Dendritic cell treated with granulocyte-macrophage colony-stimulating factor and Interleukin-4, amounts not matched to agents 40 ng/mL and 50 ng/mL, for 4 days (primary cell): ENCODE measurements at regions of chr12 and their contacts with region 1.

Region 1: GRCh38 chr12:59491877-59492276 is 104.0 kb upstream of the SLC16A7 start:
- H3K4me3 Mint-ChIP-seq: no peak overlapping the region
- H3K27ac Mint-ChIP-seq: no peak overlapping the region
- H3K4me1 Mint-ChIP-seq: peaks cover 6% of the 10 kb centered on the region
- H3K27me3 Mint-ChIP-seq: peaks cover 12% of the 10 kb centered on the region

Region 2: GRCh38 chr12:59619461-59620240 is 127.8 kb after region 1 on chr12:
- intact Hi-C with region 1: loop called (anchors 5 kb)
- H3K4me3 Mint-ChIP-seq: no peak overlapping the region
- H3K27ac Mint-ChIP-seq: peak overlapping the region; percentile 76
- H3K4me1 Mint-ChIP-seq: peaks cover 15% of the 10 kb centered on the region
- H3K27me3 Mint-ChIP-seq: no peaks in the 10 kb centered on the region

Region 3: DNA sequence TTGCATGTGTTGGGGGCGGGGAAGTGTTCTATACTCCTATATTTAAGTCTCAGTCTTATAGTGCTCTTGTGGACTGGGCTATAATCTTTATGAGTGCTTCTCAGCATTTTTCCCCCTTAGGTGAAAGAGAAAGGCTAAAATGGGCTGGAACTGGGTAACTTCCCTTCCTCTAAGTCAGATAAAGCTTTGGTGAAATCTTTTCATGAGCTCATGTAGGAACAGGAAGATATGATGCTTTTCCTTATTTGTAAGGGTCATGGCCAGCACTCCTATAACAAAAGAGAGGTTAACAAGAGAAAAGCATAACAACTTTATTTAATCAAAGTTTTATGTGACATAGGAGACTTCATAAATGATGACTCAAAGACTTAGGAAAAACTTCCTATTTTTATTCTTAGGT is 945.4 kb after region 1 on chr12:
- intact Hi-C with region 1: no loop called
- H3K4me3 Mint-ChIP-seq: no peak overlapping the region
- H3K27ac Mint-ChIP-seq: no peak overlapping the region
- H3K4me1 Mint-ChIP-seq: no peaks in the 10 kb centered on the region
- H3K27me3 Mint-ChIP-seq: no peaks in the 10 kb centered on the region